Thyroid gland (tissue), 4 donors: ENCODE measurements at regions of chr11 and their contacts with region 1.

Region 1: DNA sequence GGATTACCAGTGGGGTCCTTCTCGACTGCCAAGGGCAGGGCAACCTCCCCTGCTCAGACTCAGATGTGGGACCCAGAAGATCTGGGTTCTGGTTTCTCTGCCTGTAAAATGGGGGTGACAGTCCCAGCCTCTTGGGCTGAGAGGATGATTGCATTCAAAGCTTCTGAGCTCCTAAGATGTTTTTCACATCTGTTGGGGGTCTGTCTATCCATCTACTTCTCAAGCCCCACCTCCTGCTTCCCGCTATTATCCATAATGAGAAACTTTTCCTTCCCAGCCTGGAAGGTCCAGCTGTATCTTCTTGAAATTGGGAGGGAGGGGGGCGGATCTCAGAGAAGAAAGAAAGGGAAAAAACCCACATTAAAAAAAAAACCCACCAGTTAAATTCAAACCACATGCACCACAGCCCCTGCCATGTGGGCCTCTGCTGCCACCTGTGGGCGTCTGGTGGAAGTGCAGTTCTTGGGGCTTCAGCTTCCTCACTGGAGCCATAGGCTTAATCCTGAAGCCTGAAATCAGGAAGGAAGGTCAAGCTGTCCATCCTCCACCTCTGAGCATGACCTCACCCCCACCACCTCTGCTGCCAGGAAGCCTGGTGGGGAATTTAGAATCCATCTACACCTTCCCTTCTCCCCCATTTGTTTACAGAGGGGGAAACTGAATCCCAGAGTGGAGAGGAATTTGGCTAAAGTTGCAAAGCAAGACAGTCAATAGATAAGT is 27.3 kb downstream of the ARHGEF17 start:
- DNase-seq: peak; percentile 78 to 87
- H3K4me3 ChIP-seq: no peak overlapping the region
- H3K27ac ChIP-seq: peak overlapping the region in 2 of 3 donors; percentile 60 to 81
- H3K4me1 ChIP-seq: peaks cover 46 to 59% of the 10 kb centered on the region in 2 donors
- H3K27me3 ChIP-seq: no peaks in the 10 kb centered on the region
- CTCF ChIP-seq: peak; percentile 91 to 99 (median 92)
- POLR2A ChIP-seq: no peak

Region 2: DNA sequence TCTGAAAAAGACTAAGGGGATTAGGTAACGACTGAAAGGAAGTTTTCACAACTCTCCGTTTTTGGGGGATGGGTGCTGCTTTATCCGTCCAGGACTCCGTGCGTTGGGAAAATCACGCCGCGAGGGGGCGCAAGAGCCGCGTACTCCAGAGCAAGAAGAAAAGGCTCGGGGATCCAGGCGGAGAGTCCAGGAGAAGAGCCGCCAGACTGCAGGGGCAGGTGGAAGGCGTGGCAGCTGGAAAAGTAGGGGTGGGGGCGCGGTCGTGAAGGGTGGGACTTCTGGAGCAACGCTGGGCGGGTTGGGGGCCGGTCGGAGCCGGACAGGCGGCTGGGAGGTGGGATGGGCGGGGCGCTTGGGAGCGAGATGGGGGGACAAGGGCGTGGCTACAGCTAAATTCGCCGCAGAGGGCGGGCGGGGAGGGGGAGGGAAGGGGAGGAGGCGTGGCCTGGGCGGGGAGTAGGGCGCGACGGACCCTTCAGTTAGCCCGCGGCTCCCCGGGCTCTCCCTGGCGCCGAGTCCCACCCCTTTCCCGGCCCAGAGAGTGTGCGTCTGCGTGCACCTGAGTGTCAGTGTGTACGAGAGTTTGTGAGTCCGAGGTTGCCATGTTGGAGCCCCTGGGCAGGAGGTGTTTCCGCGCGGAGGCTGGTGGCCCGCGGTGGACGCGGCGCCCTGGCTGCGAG is 27.9 kb before region 1 on chr11:
- intact Hi-C with region 1: loop called (anchors 2 kb)
- DNase-seq: peak; percentile 100
- H3K4me3 ChIP-seq: peak overlapping the region; percentile 61 to 65 (median 61)
- H3K27ac ChIP-seq: peak overlapping the region; percentile 97 to 99 (median 98)
- H3K4me1 ChIP-seq: peaks cover 35% of the 10 kb centered on the region in 2 donors
- H3K27me3 ChIP-seq: no peaks in the 10 kb centered on the region
- CTCF ChIP-seq: peak; percentile 63 to 97 (median 88)
- POLR2A ChIP-seq: peak in 1 of 2 donors; percentile 75